PC-9 (cell line): ENCODE measurements at regions of chr3 and their contacts with region 1.

Region 1: DNA sequence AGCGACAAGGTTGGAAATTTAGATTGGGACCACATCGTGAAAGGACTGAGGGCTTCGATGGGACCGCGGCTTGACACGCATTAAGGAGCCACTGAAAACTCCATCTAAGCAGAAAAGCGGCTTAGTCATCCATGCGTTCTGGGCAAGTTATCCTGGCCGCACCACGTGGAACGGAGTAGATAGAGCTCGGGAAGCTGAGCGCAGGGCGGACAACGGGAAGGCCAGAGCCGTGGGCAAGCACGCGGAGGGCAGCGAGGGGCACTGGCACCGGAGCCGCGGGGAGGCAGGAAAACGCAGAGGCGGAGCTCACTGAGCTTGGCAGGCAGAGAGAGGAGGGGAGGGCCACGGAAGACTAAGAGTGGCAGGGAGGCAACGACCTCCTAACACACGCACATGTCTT is 61.3 kb upstream of the VGLL4 start:
- DNase-seq: no peak
- H3K4me3 ChIP-seq: no peak overlapping the region
- H3K27ac ChIP-seq: no peak overlapping the region
- H3K4me1 ChIP-seq: peaks cover 9% of the 10 kb centered on the region
- H3K27me3 ChIP-seq: no peaks in the 10 kb centered on the region
- CTCF ChIP-seq: no peak

Region 2: DNA sequence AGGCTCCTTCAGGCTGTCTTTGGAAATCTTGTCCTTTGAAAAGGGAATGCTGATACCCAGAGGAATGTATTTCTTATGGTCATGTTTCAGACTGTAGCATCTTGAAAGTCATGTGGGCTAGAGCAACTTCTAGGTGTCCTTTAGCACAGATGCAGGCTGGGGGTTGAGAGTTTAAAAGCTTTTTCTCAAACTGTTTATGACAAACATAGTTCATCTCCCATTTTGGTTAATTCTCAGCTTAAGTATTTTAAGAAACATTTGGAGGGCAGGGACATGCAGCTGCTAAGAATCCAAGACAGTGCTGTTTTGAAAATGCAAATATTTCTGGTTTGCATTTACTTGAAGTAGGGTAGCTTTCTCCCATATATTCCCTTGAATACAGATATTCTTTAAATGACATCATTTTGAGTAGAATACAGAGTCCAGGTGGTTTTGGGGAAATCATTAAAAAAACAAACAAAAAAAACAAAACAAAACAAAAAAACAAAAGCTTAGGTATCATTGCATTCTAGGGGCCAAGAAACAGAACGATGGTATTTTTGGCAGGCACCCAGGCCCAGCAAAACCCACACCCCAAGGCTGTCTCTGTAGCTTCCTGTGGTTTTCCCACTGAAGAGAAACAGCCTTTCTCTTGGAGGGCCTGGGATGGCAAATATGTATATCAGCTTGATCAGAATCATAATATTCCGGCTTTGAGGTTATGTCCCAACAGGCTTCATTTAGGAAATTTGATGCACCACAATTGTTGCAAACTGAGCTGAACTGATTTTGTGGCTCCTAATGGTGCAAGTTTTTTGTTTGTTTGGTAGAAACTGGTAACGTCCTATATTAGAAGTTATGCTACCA is 312.8 kb before region 1 on chr3:
- CTCF ChIA-PET with region 1: no interaction called
- POLR2A ChIA-PET with region 1: interaction called, 19 read pairs
- intact Hi-C with region 1: no loop called
- DNase-seq: peak in 1 of 2 experiments; percentile 20
- H3K4me3 ChIP-seq: no peak overlapping the region
- H3K27ac ChIP-seq: no peak overlapping the region
- H3K4me1 ChIP-seq: no peaks in the 10 kb centered on the region
- H3K27me3 ChIP-seq: no peaks in the 10 kb centered on the region
- CTCF ChIP-seq: no peak

Region 3: GRCh38 chr3:11643605-11644087 is 61.4 kb before region 1 on chr3 and contains the start of gene VGLL4:
- CTCF ChIA-PET with region 1: no interaction called
- POLR2A ChIA-PET with region 1: no interaction called
- intact Hi-C with region 1: no loop called
- DNase-seq: peak; percentile 71 to 73
- H3K4me3 ChIP-seq: peak within 1 kb of the TSS; percentile 77
- H3K27ac ChIP-seq: peak within 1 kb of the TSS; percentile 66
- H3K4me1 ChIP-seq: peaks cover 25% of the 10 kb centered on the region
- H3K27me3 ChIP-seq: no peaks in the 10 kb centered on the region
- CTCF ChIP-seq: no peak
- total RNA-seq, gene VGLL4: 39.1 and 42.2 TPM in 2 replicates

Region 4: DNA sequence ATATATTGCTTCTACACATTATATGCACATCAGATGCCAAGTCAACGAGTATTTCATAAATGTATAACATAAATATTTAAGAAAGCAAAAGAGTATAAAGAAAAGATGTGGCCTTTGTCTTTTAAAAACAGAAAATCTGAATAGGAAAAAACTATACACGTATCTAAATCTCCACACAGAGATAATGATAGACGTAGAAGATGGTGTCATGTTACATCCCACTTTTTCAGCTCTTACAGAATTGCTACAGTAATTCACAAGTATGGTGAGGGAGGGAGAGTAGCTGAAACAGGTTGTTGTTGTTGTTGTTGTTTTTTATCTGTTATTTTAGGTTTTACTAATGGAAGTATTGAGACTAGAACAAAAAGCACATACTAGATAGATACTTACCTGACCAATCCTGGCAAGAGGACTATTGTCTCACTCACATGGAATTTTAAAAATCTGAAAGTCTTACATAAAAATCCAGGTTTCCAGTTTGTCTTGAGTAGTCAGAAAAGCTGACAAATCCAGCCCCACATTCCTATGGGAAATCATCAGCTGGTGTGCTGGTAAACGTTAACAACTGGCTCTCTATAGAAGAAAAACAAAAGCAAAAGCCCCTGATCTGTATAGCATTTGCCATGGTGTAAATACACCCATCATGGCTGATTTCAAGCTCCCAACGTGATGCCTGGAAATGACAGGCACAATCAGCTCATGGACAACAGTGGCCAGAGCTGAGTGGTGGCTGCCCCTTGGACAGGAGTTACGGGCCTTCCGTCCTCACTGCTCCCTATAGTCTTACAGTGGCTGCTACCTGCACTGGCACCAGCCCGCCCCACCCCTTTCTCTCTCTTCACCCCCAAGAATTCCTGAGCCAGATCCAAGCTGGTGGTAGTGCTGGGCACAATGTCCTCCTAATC is 13.9 kb before region 1 on chr3:
- CTCF ChIA-PET with region 1: no interaction called
- POLR2A ChIA-PET with region 1: interaction called, 46 read pairs
- intact Hi-C with region 1: no loop called
- DNase-seq: peak; percentile 27 to 73
- H3K4me3 ChIP-seq: no peak overlapping the region
- H3K27ac ChIP-seq: peak overlapping the region; percentile 65
- H3K4me1 ChIP-seq: peaks cover 20% of the 10 kb centered on the region
- H3K27me3 ChIP-seq: no peaks in the 10 kb centered on the region
- CTCF ChIP-seq: no peak

Region 5: DNA sequence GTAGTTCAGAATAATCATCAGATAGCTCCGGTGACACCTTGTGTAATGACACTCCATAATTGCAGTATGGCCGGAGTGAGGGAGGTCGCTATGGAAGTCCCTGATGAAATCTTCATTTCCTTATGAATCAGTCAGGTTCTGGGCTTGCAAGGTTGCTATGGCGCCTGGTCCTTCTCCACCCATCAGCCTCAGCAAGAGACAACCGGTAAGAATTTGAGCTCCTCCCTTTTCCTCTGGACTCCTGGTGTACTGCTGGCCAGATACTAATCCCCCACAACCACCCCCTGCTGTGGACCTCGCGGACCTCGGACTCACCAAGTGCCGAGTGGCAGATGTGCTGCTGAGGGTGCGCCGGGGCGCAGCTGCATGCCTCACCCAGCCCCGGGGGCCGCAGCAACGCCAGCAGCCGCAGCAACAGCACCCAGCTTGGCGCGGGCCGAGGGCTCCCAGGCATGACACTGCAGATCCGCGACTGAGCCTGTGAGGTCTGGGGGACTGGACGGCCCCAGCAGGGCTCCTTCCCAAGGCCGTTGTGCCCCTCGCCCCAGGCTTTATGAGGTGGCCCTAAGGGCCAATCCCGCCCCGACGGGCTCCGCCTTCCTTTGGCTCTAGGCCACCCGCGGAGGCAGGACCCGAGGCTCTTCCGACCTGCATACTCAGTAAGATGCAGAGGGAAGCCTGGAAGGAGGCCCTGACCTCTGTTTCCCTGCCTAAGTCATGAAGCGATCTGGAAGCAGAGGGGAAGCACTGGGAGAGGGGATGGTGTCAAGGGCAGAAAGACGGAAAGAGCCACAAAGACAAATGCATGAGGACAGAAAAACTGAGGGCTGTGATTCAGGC is 453.6 kb after region 1 on chr3 and contains the start of gene TIMP4:
- CTCF ChIA-PET with region 1: no interaction called
- POLR2A ChIA-PET with region 1: interaction called, 11 read pairs
- intact Hi-C with region 1: no loop called
- DNase-seq: peak; percentile 76 to 91
- H3K4me3 ChIP-seq: peak within 1 kb of the TSS; percentile 57
- H3K27ac ChIP-seq: peak within 1 kb of the TSS; percentile 84
- H3K4me1 ChIP-seq: peaks cover 42% of the 10 kb centered on the region
- H3K27me3 ChIP-seq: no peaks in the 10 kb centered on the region
- CTCF ChIP-seq: no peak
- total RNA-seq, gene TIMP4: 15.5 and 19.0 TPM in 2 replicates